Body of pancreas (tissue), 4 donors: ENCODE measurements at regions of chr4 and their contacts with region 1.

Region 1: GRCh38 chr4:142719854-142720541 is 126.1 kb downstream of the INPP4B start:
- DNase-seq: no peak
- ATAC-seq: peak; percentile 56
- H3K4me3 ChIP-seq: no peak overlapping the region
- H3K27ac ChIP-seq: no peak overlapping the region
- H3K4me1 ChIP-seq: no peaks in the 10 kb centered on the region
- H3K27me3 ChIP-seq: no peaks in the 10 kb centered on the region
- CTCF ChIP-seq: peak in 6 of 7 experiments; percentile 35 to 66 (median 58)
- POLR2A ChIP-seq: no peak

Region 2: DNA sequence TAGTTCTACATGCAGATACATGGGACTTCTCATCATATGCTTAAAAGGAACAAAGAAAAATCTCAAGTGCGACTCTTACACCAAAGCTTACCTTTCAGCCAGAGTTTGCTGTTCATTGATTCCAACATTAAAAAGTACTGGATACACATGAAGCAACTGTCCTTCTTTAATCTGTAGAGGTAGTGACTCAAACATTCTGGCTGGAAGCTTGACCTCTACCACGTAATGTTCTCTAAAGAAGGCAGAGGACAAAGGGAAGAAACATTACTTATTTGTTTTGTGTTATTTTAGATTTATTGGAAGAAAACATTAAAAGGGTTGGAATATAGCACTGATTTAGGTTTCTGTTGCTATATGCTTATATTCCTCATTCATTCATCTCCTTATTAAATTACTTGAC is 607.5 kb before region 1 on chr4:
- intact Hi-C with region 1: loop called (anchors 10 kb)
- DNase-seq: no peak
- ATAC-seq: no peak
- H3K4me3 ChIP-seq: no peak overlapping the region
- H3K27ac ChIP-seq: no peak overlapping the region
- H3K4me1 ChIP-seq: no peaks in the 10 kb centered on the region
- H3K27me3 ChIP-seq: no peaks in the 10 kb centered on the region
- CTCF ChIP-seq: no peak
- POLR2A ChIP-seq: no peak

Region 3: GRCh38 chr4:142984871-142985585 is 265.0 kb after region 1 on chr4:
- intact Hi-C with region 1: no loop called
- DNase-seq: peak in 1 of 4 donors; percentile 13
- ATAC-seq: no peak
- H3K4me3 ChIP-seq: no peak overlapping the region
- H3K27ac ChIP-seq: no peak overlapping the region
- H3K4me1 ChIP-seq: no peaks in the 10 kb centered on the region
- H3K27me3 ChIP-seq: no peaks in the 10 kb centered on the region
- CTCF ChIP-seq: peak; percentile 14 to 45 (median 36)
- POLR2A ChIP-seq: no peak